A549 (cell line): ENCODE measurements at regions of chr17 and their contacts with region 1.

Region 1: GRCh38 chr17:82924798-82925197 is 85.0 kb upstream of the ZNF750 start:
- DNase-seq: no peak
- ATAC-seq: 0 out of 6 replicates have a peak, but pooled peaks of 1 of the 2 experiments have one; percentile 27
- H3K4me3 ChIP-seq: no peak overlapping the region
- H3K27ac ChIP-seq: no peak overlapping the region
- H3K4me1 ChIP-seq: 0 out of 3 replicates have a peak, but pooled peaks cover 5% of the 10 kb centered on the region
- CTCF ChIP-seq: no peak
- EP300 ChIP-seq: no peak
- POLR2A ChIP-seq: 0 out of 2 replicates have a peak, but pooled peaks have one; percentile 10
- RAD21 ChIP-seq: no peak

Region 2: GRCh38 chr17:82863941-82864774 is 60.6 kb before region 1 on chr17:
- CTCF ChIA-PET with region 1: no interaction called
- POLR2A ChIA-PET with region 1: no interaction called
- DNase-seq: no peak
- ATAC-seq: peak in 1 of 2 experiments; percentile 22; a peak in 3 of 6 replicates
- H3K4me3 ChIP-seq: no peak overlapping the region
- H3K27ac ChIP-seq: peak overlapping the region in 1 of 2 experiments; percentile 18; a peak in 1 of 6 replicates
- H3K4me1 ChIP-seq: peaks cover 16% of the 10 kb centered on the region; the same call in 2 of the 3 replicates
- CTCF ChIP-seq: no peak
- EP300 ChIP-seq: no peak
- POLR2A ChIP-seq: no peak
- RAD21 ChIP-seq: no peak

Region 3: DNA sequence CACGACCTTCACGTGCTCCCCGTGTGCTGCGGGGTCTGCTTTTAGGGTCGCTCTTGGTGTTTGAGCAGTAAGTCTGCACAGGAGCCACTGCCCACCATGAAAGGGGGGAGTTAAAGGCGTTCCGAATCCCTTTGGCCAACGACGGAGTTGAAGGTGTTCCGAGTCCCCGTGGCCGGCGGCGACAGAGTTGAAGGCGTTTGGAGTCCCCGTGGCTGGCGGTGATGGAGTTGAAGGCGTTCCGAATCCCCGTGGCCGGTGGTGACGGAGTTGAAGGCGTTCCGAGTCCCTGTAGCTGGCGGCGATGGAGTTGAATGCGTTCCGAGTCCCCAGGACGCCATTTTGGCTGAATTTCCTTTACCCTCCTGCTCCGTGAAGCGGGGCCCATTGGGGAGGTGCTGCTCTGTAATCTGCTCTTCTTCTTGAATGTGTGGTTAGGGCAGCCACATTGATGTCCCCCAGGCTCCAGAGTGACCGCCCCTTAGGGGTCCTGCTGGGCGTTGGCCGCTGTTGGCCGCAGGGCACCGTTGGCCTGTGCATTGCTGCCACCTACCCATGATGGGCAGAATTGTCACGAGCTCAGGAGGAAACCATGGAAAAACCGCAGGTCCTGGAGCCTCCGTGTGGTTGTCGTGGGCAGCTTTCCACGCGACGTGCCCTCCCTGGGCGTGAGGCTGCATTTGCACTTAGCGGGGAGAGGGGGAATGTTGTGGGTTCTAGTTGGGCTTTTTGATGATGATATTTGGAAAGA is 11.3 kb before region 1 on chr17:
- CTCF ChIA-PET with region 1: interaction called, 27 read pairs
- POLR2A ChIA-PET with region 1: no interaction called
- DNase-seq: peak; percentile 31
- ATAC-seq: peak in 1 of 2 experiments; percentile 50; a peak in 3 of 6 replicates
- H3K4me3 ChIP-seq: no peak overlapping the region
- H3K27ac ChIP-seq: no peak overlapping the region
- H3K4me1 ChIP-seq: no peaks in the 10 kb centered on the region
- CTCF ChIP-seq: peak; percentile 18; the same call in 2 of the 3 replicates
- EP300 ChIP-seq: no peak
- POLR2A ChIP-seq: no peak
- RAD21 ChIP-seq: peak in 1 of 2 experiments; percentile 54; a peak in 2 of 5 replicates

Region 4: DNA sequence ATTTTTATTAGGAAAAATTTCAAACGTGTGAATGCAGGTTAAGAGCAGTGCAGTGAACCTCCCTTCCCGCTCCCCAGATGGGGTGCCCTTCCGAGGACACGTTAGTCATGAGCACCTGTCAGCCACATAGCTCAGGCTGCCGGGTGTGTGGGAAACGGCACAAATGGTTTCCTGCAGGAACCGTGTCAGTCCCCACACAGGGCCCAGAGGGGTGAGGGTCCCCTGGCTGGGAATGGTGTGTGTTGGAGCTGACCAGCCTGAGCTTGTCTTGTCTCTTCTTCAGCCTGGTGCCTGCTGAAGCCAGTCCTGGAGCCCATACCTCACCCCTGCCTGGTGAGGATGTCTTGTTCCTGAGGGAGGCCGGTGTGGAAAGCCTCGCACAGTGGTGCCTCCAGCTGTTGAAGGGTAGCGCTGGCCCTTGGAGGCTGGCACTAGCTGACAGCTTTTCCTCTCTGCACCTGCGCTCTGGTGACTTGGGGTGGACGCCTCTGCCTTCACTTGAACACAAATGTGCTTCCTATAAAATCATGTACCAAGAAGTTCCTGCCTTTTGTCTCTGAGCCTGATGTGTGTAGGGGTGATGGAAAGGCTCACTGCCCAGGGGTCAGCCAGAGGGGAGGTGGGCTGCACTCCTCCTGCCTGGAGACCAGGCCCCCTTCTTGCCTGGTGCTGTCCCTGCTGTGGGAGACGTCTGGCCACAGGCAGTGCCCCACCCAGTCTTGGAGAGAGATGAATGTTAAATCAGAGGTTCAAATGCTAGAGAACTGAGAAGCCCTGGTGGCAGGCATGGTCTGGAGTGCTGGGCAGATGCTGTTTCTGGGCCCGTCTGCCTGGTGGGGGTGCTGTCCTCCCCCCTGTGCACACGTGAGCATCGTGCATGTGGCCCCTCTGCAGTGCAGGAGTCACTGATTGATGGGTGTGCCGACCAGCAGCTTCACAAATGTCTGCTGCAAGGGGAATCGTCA is 17.6 kb after region 1 on chr17:
- CTCF ChIA-PET with region 1: interaction called, 10 read pairs
- POLR2A ChIA-PET with region 1: no interaction called
- DNase-seq: no peak
- ATAC-seq: no peak
- H3K4me3 ChIP-seq: no peak overlapping the region
- H3K27ac ChIP-seq: no peak overlapping the region
- H3K4me1 ChIP-seq: no peaks in the 10 kb centered on the region
- CTCF ChIP-seq: no peak
- EP300 ChIP-seq: no peak
- POLR2A ChIP-seq: no peak
- RAD21 ChIP-seq: no peak